Activated CD4-positive, alpha-beta memory T cell treated with anti-CD3 and anti-CD28 coated beads, Interleukin-2, amount 10 ng/mL, durations not matched to agents 7 days and 5 days (primary cell): ENCODE measurements at regions of chr6 and their contacts with region 1.

Region 1: GRCh38 chr6:30075161-30075986 is at the start of gene RNF39:
- DNase-seq: no peak
- H3K4me3 Mint-ChIP-seq: no peak within 1 kb of the TSS
- H3K27ac Mint-ChIP-seq: no peak within 1 kb of the TSS
- H3K4me1 Mint-ChIP-seq: peaks cover 48% of the 10 kb centered on the region
- H3K27me3 Mint-ChIP-seq: peaks cover 79% of the 10 kb centered on the region
- total RNA-seq, gene RNF39: not detected

Region 2: GRCh38 chr6:30061092-30061857 is 14.1 kb before region 1 on chr6 and contains the start of gene POLR1H:
- CTCF ChIA-PET with region 1: interaction called, 6 read pairs
- POLR2A ChIA-PET with region 1: interaction called, 28 read pairs
- DNase-seq: peak; percentile 90
- H3K4me3 Mint-ChIP-seq: peak within 1 kb of the TSS; percentile 98
- H3K27ac Mint-ChIP-seq: peak within 1 kb of the TSS; percentile 97
- H3K4me1 Mint-ChIP-seq: peaks cover 53% of the 10 kb centered on the region
- H3K27me3 Mint-ChIP-seq: no peaks in the 10 kb centered on the region
- total RNA-seq, gene POLR1H: 75.5 to 77.8 TPM